ENCODE measurements at regions of chr7 and their contacts with region 1.

Region 1: GRCh38 chr7:129091484-129092002 is 36.6 kb upstream of the TNPO3 start:
- DNase-seq: peak; percentile 91
- H3K4me3 ChIP-seq: peak overlapping the region in 1 of 2 experiments; percentile 14; a peak in 1 of 4 replicates
- H3K27ac ChIP-seq: no peak overlapping the region
- H3K4me1 ChIP-seq: no peaks in the 10 kb centered on the region; a peak in 1 of 4 replicates
- H3K27me3 ChIP-seq: no peaks in the 10 kb centered on the region; the same call in 1 of the 2 replicates
- CTCF ChIP-seq: peak; percentile 100
- EP300 ChIP-seq: no peak
- RAD21 ChIP-seq: peak; percentile 100

Region 2: GRCh38 chr7:128591705-128592104 is 499.8 kb before region 1 on chr7:
- CTCF ChIA-PET with region 1: no interaction called
- POLR2A ChIA-PET with region 1: no interaction called
- DNase-seq: peak; percentile 61
- H3K4me3 ChIP-seq: no peak overlapping the region
- H3K27ac ChIP-seq: peak overlapping the region in 1 of 2 experiments; percentile 48; a peak in 2 of 4 replicates
- H3K4me1 ChIP-seq: peaks cover 0 to 4% of the 10 kb centered on the region in 2 experiments; a peak in 1 of 4 replicates
- H3K27me3 ChIP-seq: no peaks in the 10 kb centered on the region
- CTCF ChIP-seq: no peak
- EP300 ChIP-seq: peak in 1 of 2 experiments; percentile 67; a peak in 2 of 4 replicates
- RAD21 ChIP-seq: peak; percentile 18; the same call in 1 of the 2 replicates

Region 3: GRCh38 chr7:128904381-128905197 is 187.0 kb before region 1 on chr7:
- CTCF ChIA-PET with region 1: interaction called, 137 read pairs
- POLR2A ChIA-PET with region 1: no interaction called
- DNase-seq: peak; percentile 87
- H3K4me3 ChIP-seq: no peak overlapping the region
- H3K27ac ChIP-seq: no peak overlapping the region
- H3K4me1 ChIP-seq: peaks cover 0 to 6% of the 10 kb centered on the region in 2 experiments; a peak in 1 of 4 replicates
- H3K27me3 ChIP-seq: 0 out of 2 replicates have a peak, but pooled peaks cover 8% of the 10 kb centered on the region
- CTCF ChIP-seq: peak; percentile 74
- EP300 ChIP-seq: no peak
- RAD21 ChIP-seq: peak; percentile 79

Region 4: DNA sequence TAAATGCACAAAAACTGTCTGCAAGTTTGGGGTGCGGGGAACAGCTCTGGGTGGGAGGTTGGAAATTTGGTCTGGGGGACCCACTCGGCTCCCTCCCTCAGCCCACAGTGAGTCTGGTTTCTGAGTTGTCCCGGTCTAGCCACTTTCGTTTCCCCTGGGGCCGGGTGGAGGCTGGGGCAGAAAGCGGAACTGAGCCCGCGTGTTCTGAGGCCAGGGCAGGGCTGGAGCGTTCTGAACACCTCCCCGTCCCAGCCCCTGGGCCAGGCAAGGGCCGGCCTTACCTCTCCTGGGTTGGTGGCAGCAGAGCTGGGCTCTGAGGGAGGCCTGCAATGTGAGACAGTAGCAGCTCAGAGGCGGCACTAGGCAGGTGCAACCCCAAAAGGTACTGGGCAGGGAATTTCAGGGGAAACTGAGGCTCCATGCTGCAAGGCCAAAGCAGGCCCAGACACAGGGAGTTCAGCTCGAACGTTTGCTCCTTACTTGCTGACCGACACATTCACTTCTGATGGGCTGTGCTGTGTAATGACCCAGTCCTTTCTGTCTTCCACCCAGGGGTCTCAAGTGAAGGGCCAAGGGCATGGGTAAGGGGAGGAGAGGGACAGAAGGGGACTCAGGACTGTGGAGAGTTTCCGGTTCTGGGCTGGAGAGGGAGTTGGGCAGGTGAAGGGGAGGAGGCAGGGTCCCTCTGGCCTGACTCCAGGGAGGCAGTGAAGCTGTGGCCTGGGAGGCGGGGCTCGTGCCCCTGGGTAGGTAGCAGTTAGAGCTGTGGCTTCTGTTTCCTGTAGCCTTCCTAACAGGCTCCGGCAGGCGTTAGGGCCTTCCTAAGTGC is 150.8 kb before region 1 on chr7:
- CTCF ChIA-PET with region 1: interaction called, 12 read pairs
- POLR2A ChIA-PET with region 1: no interaction called
- DNase-seq: peak; percentile 39
- H3K4me3 ChIP-seq: no peak overlapping the region
- H3K27ac ChIP-seq: no peak overlapping the region
- H3K4me1 ChIP-seq: peaks cover 3 to 11% of the 10 kb centered on the region in 2 experiments; a peak in 1 of 4 replicates
- H3K27me3 ChIP-seq: peaks cover 27% of the 10 kb centered on the region
- CTCF ChIP-seq: no peak
- EP300 ChIP-seq: no peak
- RAD21 ChIP-seq: no peak

Region 5: GRCh38 chr7:129017933-129018538 is 73.5 kb before region 1 on chr7:
- CTCF ChIA-PET with region 1: interaction called, 12 read pairs
- POLR2A ChIA-PET with region 1: no interaction called
- DNase-seq: no peak
- H3K4me3 ChIP-seq: no peak overlapping the region
- H3K27ac ChIP-seq: no peak overlapping the region
- H3K4me1 ChIP-seq: no peaks in the 10 kb centered on the region
- H3K27me3 ChIP-seq: no peaks in the 10 kb centered on the region
- CTCF ChIP-seq: no peak
- EP300 ChIP-seq: no peak
- RAD21 ChIP-seq: no peak

Region 6: GRCh38 chr7:129054438-129055293 is 36.9 kb before region 1 on chr7 and contains the start of gene TNPO3:
- CTCF ChIA-PET with region 1: interaction called, 29 read pairs
- POLR2A ChIA-PET with region 1: interaction called, 4 read pairs
- DNase-seq: peak; percentile 97
- H3K4me3 ChIP-seq: peak within 1 kb of the TSS; percentile 89 to 98
- H3K27ac ChIP-seq: peak within 1 kb of the TSS; percentile 97 to 99
- H3K4me1 ChIP-seq: peaks cover 0 to 14% of the 10 kb centered on the region in 2 experiments; a peak in 2 of 4 replicates
- H3K27me3 ChIP-seq: no peaks in the 10 kb centered on the region
- CTCF ChIP-seq: no peak; the same call in 1 of the 2 replicates
- EP300 ChIP-seq: peak in 1 of 2 experiments; percentile 75; a peak in 2 of 4 replicates
- RAD21 ChIP-seq: no peak
- polyA plus RNA-seq, gene TNPO3: 27.8 and 32.7 TPM in 2 replicates

Region 7: GRCh38 chr7:129101746-129102145 is 10.2 kb after region 1 on chr7:
- CTCF ChIA-PET with region 1: interaction called, 70 read pairs
- POLR2A ChIA-PET with region 1: no interaction called
- DNase-seq: no peak
- H3K4me3 ChIP-seq: no peak overlapping the region; a peak in 1 of 4 replicates
- H3K27ac ChIP-seq: no peak overlapping the region
- H3K4me1 ChIP-seq: no peaks in the 10 kb centered on the region
- H3K27me3 ChIP-seq: peaks cover 5% of the 10 kb centered on the region; the same call in 1 of the 2 replicates
- CTCF ChIP-seq: no peak
- EP300 ChIP-seq: no peak
- RAD21 ChIP-seq: no peak

Region 8: DNA sequence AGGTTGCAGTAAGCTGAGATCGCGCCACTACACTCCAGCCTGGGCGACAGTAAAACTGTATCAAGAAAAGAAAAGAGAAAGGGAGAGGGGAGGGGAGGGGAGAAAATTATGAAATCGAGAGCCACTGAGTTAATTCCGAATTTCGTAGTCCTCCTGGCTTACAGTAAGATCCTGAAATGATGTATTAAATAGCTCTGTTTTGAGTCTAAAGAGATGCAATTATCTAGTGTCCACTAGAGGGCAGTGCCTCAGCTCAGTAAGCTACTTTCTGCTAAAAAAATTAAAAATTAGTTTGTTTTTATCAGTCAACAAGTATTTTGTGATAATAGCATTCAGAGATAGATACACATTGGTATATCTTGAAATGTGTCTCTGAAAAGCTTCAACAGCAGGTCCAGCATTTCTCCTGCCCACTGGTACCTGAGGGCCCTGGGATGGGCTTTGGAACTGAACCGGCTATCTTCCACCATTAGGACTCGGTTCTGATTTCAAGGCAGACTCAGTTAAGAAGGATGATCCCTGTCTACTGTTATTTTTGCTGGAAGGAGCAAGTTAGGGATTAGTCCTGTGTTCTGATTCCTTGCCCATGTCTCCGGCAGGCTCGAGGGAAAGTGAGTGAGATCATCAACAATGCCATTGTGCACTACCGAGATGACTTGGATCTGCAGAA is 72.5 kb after region 1 on chr7:
- CTCF ChIA-PET with region 1: interaction called, 13 read pairs
- POLR2A ChIA-PET with region 1: no interaction called
- DNase-seq: peak; percentile 76
- H3K4me3 ChIP-seq: no peak overlapping the region; a peak in 1 of 4 replicates
- H3K27ac ChIP-seq: no peak overlapping the region
- H3K4me1 ChIP-seq: peaks cover 0 to 10% of the 10 kb centered on the region in 2 experiments; a peak in 1 of 4 replicates
- H3K27me3 ChIP-seq: no peaks in the 10 kb centered on the region
- CTCF ChIP-seq: peak; percentile 100
- EP300 ChIP-seq: no peak
- RAD21 ChIP-seq: peak; percentile 79